Activated naive CD4-positive, alpha-beta T cell treated with anti-CD3 and anti-CD28 coated beads for 36 hours (primary cell): ENCODE measurements at regions of chr10 and their contacts with region 1.

Region 1: GRCh38 chr10:27241652-27242472 is 1.3 kb upstream of the ACBD5 start:
- DNase-seq: peak; percentile 89
- H3K4me3 Mint-ChIP-seq: peak overlapping the region; percentile 93
- H3K27ac Mint-ChIP-seq: peak overlapping the region; percentile 100
- H3K4me1 Mint-ChIP-seq: peaks cover 22% of the 10 kb centered on the region
- H3K27me3 Mint-ChIP-seq: no peaks in the 10 kb centered on the region

Region 2: DNA sequence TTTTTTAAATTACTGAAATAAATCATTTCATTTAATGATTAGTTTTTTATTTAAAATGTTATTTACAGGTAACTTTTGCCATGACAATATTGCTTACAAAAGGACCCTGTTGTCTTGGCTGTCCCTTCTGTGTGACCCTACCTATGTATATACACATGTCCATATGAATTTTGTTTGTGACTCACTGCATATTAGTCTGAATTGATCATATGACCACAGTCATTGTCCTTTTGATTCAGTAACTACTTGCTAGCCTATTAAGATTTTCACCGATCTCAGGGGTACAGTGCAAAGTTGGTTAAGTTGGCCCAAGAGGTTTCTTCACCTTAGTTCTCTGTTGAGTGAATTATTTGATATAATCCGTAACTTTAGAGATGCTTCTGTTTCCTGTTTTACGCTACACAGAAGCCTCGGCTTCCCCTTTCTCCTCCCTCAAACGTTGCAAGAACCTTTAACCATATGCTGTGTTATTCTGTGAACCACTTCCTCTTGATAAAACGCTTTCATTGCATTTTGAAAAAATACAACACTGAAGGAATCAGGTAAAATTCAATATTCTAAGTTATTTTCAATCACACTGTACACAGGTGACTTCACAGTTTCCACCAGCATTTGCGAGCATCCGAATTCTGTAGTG is 759.8 kb before region 1 on chr10:
- CTCF ChIA-PET with region 1: no interaction called
- intact Hi-C with region 1: loop called (anchors 5 kb)
- DNase-seq: peak; percentile 48
- H3K4me3 Mint-ChIP-seq: peak overlapping the region; percentile 69
- H3K27ac Mint-ChIP-seq: peak overlapping the region; percentile 92
- H3K4me1 Mint-ChIP-seq: peaks cover 75% of the 10 kb centered on the region
- H3K27me3 Mint-ChIP-seq: no peaks in the 10 kb centered on the region

Region 3: GRCh38 chr10:27099916-27100812 is 141.7 kb before region 1 on chr10 and contains the start of gene ANKRD26:
- CTCF ChIA-PET with region 1: no interaction called
- intact Hi-C with region 1: loop called (anchors 1 kb)
- DNase-seq: peak; percentile 96
- H3K4me3 Mint-ChIP-seq: peak within 1 kb of the TSS; percentile 83
- H3K27ac Mint-ChIP-seq: peak within 1 kb of the TSS; percentile 92
- H3K4me1 Mint-ChIP-seq: peaks cover 44% of the 10 kb centered on the region
- H3K27me3 Mint-ChIP-seq: peaks cover 2% of the 10 kb centered on the region
- total RNA-seq, gene ANKRD26: 4.6 to 6.6 TPM

Region 4: DNA sequence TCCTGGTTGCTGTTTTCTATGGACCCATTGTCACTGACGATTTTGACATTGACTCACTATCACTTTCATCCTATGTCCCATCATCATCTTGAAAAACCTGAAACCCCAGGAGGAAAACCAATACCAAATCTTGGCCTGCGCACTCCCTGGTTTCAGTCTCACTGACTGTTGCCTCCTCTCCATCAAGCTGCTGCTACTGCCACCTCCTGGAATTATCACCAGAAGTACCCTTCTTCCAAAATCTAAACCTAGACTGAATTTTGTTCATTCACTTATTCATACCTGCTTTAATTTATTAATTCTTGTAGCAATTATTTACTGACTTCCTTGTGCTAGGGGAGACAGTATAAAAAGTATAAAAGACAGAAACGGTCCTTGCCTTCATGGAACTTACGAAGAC is 43.2 kb after region 1 on chr10:
- CTCF ChIA-PET with region 1: no interaction called
- intact Hi-C with region 1: loop called (anchors 1 kb)
- DNase-seq: peak; percentile 71
- H3K4me3 Mint-ChIP-seq: no peak overlapping the region
- H3K27ac Mint-ChIP-seq: peak overlapping the region; percentile 77
- H3K4me1 Mint-ChIP-seq: peaks cover 5% of the 10 kb centered on the region
- H3K27me3 Mint-ChIP-seq: no peaks in the 10 kb centered on the region

Region 5: GRCh38 chr10:27312854-27313253 is 71.0 kb after region 1 on chr10:
- CTCF ChIA-PET with region 1: no interaction called
- intact Hi-C with region 1: no loop called
- DNase-seq: no peak
- H3K4me3 Mint-ChIP-seq: no peak overlapping the region
- H3K27ac Mint-ChIP-seq: no peak overlapping the region
- H3K4me1 Mint-ChIP-seq: peaks cover 7% of the 10 kb centered on the region
- H3K27me3 Mint-ChIP-seq: no peaks in the 10 kb centered on the region

Region 6: DNA sequence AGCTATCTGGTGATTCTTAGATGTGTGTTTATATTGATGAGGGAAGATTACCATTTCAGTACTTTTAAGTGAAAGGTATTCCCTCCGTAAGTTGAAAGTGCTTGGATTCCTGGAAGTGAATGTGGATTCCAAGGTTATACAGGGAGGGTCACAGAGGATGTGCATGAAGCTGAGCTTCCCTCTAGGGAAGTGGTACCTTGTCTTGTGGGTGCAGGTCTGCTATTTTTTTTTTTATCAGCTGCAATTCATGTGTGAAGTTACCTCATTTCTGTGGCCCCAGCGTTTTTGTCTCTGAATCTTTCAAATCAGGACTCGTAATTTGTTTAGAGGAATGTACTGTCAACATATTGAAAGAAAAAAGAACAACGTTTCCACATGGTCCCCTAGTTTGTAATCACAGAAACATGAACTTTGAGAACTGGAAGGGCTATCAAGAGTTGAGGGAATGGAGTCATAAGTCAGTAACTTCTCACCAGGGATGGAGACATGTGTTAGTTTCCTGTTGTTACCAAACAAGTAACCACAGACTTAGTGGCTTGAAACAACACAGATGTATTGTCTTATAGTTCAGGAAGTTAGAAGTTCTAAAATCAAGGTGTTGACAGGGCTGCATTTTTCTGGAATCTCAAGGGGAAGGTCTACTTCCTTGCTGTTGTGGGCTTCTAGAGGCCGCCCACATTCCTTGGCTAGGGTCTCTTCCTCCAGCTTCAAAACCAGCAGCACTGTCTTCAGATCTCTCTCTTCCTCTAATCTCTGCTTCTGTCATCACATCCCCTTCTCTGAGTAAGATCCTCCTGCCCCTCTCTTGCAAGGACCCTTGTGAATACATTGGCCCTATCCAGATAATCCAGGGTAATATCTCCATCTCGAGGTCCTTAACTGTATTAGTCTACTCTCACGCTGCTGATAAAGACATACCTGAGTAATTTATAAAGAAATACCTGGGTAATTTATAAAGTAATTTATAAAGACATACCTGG is 326.6 kb after region 1 on chr10:
- CTCF ChIA-PET with region 1: no interaction called
- intact Hi-C with region 1: no loop called
- DNase-seq: no peak
- H3K4me3 Mint-ChIP-seq: no peak overlapping the region
- H3K27ac Mint-ChIP-seq: no peak overlapping the region
- H3K4me1 Mint-ChIP-seq: peaks cover 19% of the 10 kb centered on the region
- H3K27me3 Mint-ChIP-seq: no peaks in the 10 kb centered on the region

Region 7: GRCh38 chr10:27742195-27743011 is 500.5 kb after region 1 on chr10:
- CTCF ChIA-PET with region 1: no interaction called
- intact Hi-C with region 1: loop called (anchors 5 kb)
- DNase-seq: peak; percentile 88
- H3K4me3 Mint-ChIP-seq: peak overlapping the region; percentile 68
- H3K27ac Mint-ChIP-seq: no peak overlapping the region
- H3K4me1 Mint-ChIP-seq: peaks cover 31% of the 10 kb centered on the region
- H3K27me3 Mint-ChIP-seq: peaks cover 49% of the 10 kb centered on the region

Region 8: GRCh38 chr10:28367929-28368484 is 1126.1 kb after region 1 on chr10:
- CTCF ChIA-PET with region 1: no interaction called
- intact Hi-C with region 1: loop called (anchors 10 kb)
- DNase-seq: peak; percentile 78
- H3K4me3 Mint-ChIP-seq: peak overlapping the region; percentile 49
- H3K27ac Mint-ChIP-seq: peak overlapping the region; percentile 91
- H3K4me1 Mint-ChIP-seq: peaks cover 44% of the 10 kb centered on the region
- H3K27me3 Mint-ChIP-seq: no peaks in the 10 kb centered on the region